ENCODE measurements at regions of chr1 and their contacts with region 1.

Region 1: GRCh38 chr1:193658691-193659090 is 472.3 kb upstream of the B3GALT2 start:
- DNase-seq: no peak
- H3K4me3 ChIP-seq: no peak overlapping the region
- H3K27ac ChIP-seq: no peak overlapping the region
- H3K4me1 ChIP-seq: no peaks in the 10 kb centered on the region
- H3K27me3 ChIP-seq: no peaks in the 10 kb centered on the region
- CTCF ChIP-seq: no peak
- POLR2A ChIP-seq: no peak

Region 2: DNA sequence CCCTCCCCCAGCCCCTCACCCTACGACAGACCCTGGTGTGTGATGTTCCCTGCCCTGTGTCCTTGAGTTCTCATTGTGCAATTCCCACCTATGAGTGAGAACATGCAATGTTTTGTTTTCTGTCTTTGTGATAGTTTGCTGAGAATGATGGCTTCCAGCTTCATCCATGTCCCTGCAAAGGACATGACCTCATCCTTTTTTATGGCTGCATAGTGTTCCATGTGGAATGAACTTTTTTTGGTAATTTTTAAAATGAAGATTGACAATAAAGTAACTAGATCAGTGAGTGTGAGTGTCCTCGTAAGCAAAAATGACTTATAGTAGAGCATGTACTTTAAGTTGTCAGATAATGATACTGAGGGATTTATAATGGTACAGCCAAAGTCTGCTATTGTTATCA is 12.0 kb after region 1 on chr1:
- intact Hi-C with region 1: loop called (anchors 1 kb)
- DNase-seq: no peak
- H3K4me3 ChIP-seq: no peak overlapping the region
- H3K27ac ChIP-seq: no peak overlapping the region
- H3K4me1 ChIP-seq: no peaks in the 10 kb centered on the region
- H3K27me3 ChIP-seq: no peaks in the 10 kb centered on the region
- CTCF ChIP-seq: no peak
- POLR2A ChIP-seq: no peak

Region 3: GRCh38 chr1:193700710-193701355 is 42.1 kb after region 1 on chr1:
- intact Hi-C with region 1: no loop called
- DNase-seq: no peak
- H3K4me3 ChIP-seq: no peak overlapping the region
- H3K27ac ChIP-seq: no peak overlapping the region
- H3K4me1 ChIP-seq: no peaks in the 10 kb centered on the region
- H3K27me3 ChIP-seq: no peaks in the 10 kb centered on the region
- CTCF ChIP-seq: no peak
- POLR2A ChIP-seq: no peak

Region 4: DNA sequence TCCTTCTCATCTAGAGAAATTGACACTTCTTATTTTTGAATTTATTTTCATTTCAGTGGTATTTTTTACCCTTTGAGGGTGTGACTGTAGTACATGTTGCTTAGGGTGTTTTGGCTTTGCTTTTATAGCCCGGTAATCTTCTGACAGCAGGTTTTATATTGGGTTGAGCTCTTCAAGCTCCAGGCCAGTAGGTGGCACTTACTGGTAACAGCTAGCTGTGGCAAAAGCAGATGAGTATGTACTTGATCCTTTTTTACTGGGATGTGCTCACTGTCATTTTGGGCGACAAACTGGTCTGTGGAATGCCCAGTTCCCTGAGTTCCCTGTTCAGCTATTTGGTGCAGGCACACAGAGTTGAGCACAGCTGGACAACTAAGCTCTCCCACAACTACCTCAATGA is 443.9 kb after region 1 on chr1:
- intact Hi-C with region 1: no loop called
- DNase-seq: no peak
- H3K4me3 ChIP-seq: no peak overlapping the region
- H3K27ac ChIP-seq: no peak overlapping the region
- H3K4me1 ChIP-seq: no peaks in the 10 kb centered on the region
- H3K27me3 ChIP-seq: no peaks in the 10 kb centered on the region
- CTCF ChIP-seq: no peak
- POLR2A ChIP-seq: no peak

Measured in breast epithelium (tissue), 4 donors.